ENCODE measurements at regions of chr12 and their contacts with region 1.

Region 1: DNA sequence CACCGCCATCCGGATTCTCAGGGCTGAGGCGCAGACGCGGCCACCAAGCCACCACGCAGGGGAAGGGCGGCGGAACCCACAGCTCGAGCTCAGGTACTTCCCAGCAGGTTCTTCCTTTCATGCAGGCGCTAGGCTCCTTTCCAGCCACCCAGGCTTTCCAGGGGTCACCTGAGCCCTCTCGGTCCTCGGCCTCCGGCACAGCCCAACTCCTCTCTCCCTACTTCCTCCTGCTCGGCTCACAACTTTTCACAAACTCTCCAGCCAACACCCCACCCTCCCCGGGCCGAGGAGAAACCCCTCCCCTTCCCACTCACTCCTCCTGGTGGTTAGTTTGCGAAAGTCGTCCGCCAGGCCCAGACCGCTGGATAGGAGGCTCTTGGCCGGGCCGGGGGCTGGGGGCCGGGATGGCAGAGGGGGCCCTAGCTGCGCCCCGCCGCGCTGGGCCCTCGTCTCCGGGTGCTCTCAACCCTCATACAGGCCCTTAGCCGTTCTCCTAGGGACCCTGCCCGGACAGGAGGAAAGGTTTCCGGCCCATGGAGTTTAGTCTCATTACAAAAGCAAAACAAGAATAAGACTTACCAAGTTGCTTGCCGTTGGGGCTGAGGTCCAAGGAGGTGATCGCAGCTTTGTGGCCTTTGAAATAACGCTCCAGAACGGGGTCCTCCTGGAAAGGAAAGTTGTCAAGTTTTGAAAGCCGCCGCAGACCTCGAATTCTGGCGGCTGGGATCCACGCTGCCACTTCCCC is at the start of gene GALNT4:
- DNase-seq: peak; percentile 86 to 93 (median 88)
- ATAC-seq: peak; percentile 88 to 93 (median 91)
- H3K4me3 ChIP-seq: peak within 1 kb of the TSS; percentile 77 to 99 (median 94)
- H3K27ac ChIP-seq: peak within 1 kb of the TSS; percentile 77 to 93 (median 88)
- H3K4me1 ChIP-seq: peaks cover 8 to 45% (median 32%) of the 10 kb centered on the region in 3 donors
- H3K27me3 ChIP-seq: no peaks in the 10 kb centered on the region
- CTCF ChIP-seq: peak; percentile 46 to 58 (median 54)
- total RNA-seq, gene GALNT4: 3.2 to 15.8 (median 6.5) TPM

Region 2: GRCh38 chr12:89019408-89020120 is 505.1 kb before region 1 on chr12:
- intact Hi-C with region 1: loop called in 1 of 3 experiments (anchors 10 kb)
- DNase-seq: peak; percentile 39 to 81 (median 58)
- ATAC-seq: peak; percentile 92 to 99 (median 97)
- H3K4me3 ChIP-seq: peak overlapping the region in 1 of 4 donors; percentile 28
- H3K27ac ChIP-seq: no peak overlapping the region
- H3K4me1 ChIP-seq: peaks cover 3 to 5% (median 4%) of the 10 kb centered on the region in 3 donors
- H3K27me3 ChIP-seq: no peaks in the 10 kb centered on the region
- CTCF ChIP-seq: peak; percentile 37 to 81 (median 64)

Region 3: DNA sequence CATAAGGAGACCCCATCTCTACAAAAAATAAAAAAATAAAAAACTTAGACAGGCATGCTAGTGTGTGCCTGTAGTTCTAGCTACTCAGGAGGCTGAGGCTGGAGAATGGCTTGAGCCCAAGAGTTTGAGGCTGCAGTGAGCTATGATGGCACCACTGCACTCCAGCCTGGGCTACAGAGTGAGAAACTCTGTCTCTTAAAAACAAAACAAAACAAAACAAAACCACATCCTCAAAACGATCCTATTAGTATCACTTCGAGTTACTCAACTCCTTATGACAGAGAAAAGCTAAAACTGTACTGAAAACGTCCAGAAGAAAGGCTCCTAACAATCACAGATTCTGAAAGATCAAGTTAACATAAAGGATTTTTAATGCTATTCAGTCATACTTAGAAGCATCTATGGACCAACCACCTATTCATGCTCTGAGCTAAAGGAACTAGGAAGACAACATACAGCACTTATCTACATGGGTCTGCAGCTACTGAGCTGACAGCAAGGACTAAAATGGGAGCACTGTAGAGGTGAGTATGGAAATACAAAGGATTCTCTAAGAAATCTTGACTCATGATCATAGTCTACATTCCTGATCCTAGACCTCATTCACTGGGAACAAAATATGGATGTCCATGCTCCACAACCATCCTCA is 97.1 kb before region 1 on chr12:
- intact Hi-C with region 1: no loop called
- DNase-seq: no peak
- ATAC-seq: peak in 2 of 4 donors; percentile 34 to 53
- H3K4me3 ChIP-seq: no peak overlapping the region
- H3K27ac ChIP-seq: no peak overlapping the region
- H3K4me1 ChIP-seq: no peaks in the 10 kb centered on the region
- H3K27me3 ChIP-seq: no peaks in the 10 kb centered on the region
- CTCF ChIP-seq: no peak

Region 4: DNA sequence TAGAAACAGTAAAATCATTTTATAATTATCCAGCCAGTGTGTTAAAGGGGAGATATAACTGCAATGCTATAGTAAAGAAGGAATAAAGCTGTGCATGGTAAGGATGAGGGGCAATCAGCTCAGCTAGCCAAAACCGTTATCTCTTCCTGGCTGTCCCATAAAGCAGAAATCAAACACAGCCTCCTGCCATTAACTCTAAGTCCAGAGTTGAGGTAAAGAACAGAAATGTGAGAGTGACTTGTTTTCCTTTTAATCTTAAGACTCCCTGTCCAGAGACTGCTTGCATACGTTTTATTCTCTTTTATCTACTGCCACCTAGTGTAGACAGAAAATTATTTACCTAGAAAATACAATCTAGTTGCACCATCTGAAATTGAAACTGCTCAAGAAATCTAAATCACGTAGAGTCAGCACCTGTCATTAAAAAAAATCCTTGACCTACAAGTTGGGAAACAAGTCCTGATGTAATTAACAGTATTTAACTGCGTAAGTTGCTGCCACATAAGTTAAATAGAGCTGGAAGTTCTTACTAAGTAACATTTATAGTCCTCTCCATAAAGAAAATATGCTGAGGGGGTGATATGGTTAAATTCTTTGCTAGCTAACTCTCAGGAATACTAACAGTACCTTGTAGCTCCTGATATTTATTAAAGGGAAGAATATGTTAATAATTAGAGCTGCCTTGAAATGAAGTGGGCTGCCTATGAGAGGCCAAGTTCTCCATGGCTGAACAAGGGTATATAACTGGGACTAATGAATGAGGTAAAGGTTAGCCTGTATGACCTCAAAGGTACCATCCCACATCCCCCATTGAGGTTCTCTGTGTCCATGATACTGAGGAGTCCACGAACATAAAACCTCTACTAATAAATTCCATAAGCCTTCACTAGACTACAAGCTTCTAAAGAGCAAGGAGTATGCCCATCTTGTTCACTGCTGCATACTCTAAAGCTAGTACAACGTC is 62.8 kb before region 1 on chr12:
- intact Hi-C with region 1: loop called in 1 of 3 experiments (anchors 10 kb)
- DNase-seq: no peak
- ATAC-seq: peak; percentile 84 to 96 (median 94)
- H3K4me3 ChIP-seq: no peak overlapping the region
- H3K27ac ChIP-seq: no peak overlapping the region
- H3K4me1 ChIP-seq: no peaks in the 10 kb centered on the region
- H3K27me3 ChIP-seq: no peaks in the 10 kb centered on the region
- CTCF ChIP-seq: peak; percentile 12 to 52 (median 34)

Region 5: DNA sequence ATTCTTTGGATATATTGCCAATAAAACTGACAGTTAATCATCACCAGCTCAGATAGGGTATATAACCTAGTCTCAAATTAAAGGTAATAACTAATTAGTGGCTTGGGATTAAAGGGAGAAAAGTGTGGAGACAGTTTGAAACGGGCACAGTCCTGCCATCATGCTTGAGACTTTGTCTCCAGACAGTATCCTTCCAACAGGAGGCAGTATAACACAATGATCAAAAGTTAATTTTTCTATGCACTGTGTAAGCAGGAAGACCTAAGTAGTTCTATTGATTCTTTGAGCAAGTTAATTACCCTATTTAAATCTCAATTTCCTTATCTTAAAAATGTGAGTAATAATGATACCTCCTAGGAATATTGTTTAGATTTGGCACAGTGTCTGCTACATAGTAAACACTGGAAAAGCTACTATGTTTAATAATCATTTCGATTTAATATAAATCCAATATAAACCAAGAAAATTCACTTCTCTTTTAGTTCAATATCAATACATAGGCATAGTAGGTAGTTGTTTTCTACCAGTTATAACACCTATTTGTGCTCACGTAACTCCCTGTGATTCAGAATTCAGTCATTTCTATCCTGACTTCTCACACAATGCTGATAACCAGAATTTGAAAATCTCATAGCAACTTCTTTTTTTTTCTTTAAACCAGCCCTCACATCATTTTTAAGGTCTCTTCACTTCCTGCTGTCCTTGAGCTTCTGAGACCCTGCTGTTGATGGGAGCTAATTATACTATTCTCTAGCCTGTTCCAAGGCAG is 53.8 kb before region 1 on chr12:
- intact Hi-C with region 1: loop called in 2 of 3 experiments (anchors 5 to 10 kb)
- DNase-seq: no peak
- ATAC-seq: peak; percentile 84 to 95 (median 92)
- H3K4me3 ChIP-seq: no peak overlapping the region
- H3K27ac ChIP-seq: no peak overlapping the region
- H3K4me1 ChIP-seq: no peaks in the 10 kb centered on the region
- H3K27me3 ChIP-seq: no peaks in the 10 kb centered on the region
- CTCF ChIP-seq: peak; percentile 27 to 57 (median 52)

Region 6: DNA sequence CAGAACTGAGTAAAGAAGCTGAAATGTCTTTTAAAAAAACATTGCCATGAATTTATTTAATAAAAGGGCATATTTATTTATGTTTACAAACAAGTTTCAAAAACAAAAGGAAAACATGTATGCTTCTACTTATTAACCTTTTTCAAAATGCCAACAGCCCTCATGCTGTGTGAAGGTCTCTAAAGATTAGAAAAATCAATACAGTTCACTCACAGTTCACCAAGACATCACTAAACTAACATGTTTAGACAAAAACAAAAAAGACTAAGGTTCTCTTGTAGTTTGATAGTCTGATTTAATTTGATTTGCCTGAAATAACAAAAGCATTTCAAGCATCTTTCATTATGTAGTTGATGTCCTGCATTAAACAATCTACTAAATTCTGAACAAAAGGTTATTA is 65.0 kb after region 1 on chr12:
- intact Hi-C with region 1: no loop called
- DNase-seq: no peak
- ATAC-seq: no peak
- H3K4me3 ChIP-seq: no peak overlapping the region
- H3K27ac ChIP-seq: no peak overlapping the region
- H3K4me1 ChIP-seq: peaks cover 0 to 8% (median 0%) of the 10 kb centered on the region in 3 donors
- H3K27me3 ChIP-seq: no peaks in the 10 kb centered on the region
- CTCF ChIP-seq: no peak

Region 7: GRCh38 chr12:89721291-89721987 is 196.7 kb after region 1 on chr12:
- intact Hi-C with region 1: no loop called
- DNase-seq: no peak
- ATAC-seq: peak in 2 of 4 donors; percentile 38 to 54
- H3K4me3 ChIP-seq: no peak overlapping the region
- H3K27ac ChIP-seq: no peak overlapping the region
- H3K4me1 ChIP-seq: no peaks in the 10 kb centered on the region
- H3K27me3 ChIP-seq: no peaks in the 10 kb centered on the region
- CTCF ChIP-seq: no peak

Measured in pancreas (tissue), 10 donors.